T-cell (primary cell): ENCODE measurements at regions of chr15 and their contacts with region 1.

Region 1: GRCh38 chr15:51642614-51643013 is 20.0 kb upstream of the DMXL2 start:
- DNase-seq: no peak
- ATAC-seq: no peak
- H3K4me3 ChIP-seq: no peak overlapping the region
- H3K4me3 Mint-ChIP-seq: no peak overlapping the region
- H3K27ac ChIP-seq: no peak overlapping the region
- H3K27ac Mint-ChIP-seq: no peak overlapping the region
- H3K4me1 ChIP-seq: no peaks in the 10 kb centered on the region
- H3K4me1 Mint-ChIP-seq: no peaks in the 10 kb centered on the region
- H3K27me3 ChIP-seq: no peaks in the 10 kb centered on the region
- H3K27me3 Mint-ChIP-seq: peaks cover 0 to 3% of the 10 kb centered on the region in 2 donors

Region 2: GRCh38 chr15:51621936-51622603 is 20.5 kb before region 1 on chr15:
- CTCF ChIA-PET with region 1: interaction called in 1 of 2 experiments, 10 read pairs
- POLR2A ChIA-PET with region 1: no interaction called
- DNase-seq: peak in 27 of 35 experiments; percentile 0 to 39 (median 6)
- ATAC-seq: peak; percentile 40 to 57 (median 55)
- H3K4me3 ChIP-seq: peak overlapping the region; percentile 80 to 94
- H3K4me3 Mint-ChIP-seq: peak overlapping the region; percentile 82 to 85 (median 83)
- H3K27ac ChIP-seq: peak overlapping the region; percentile 24
- H3K27ac Mint-ChIP-seq: peak overlapping the region; percentile 32 to 77
- H3K4me1 ChIP-seq: peaks cover 8 to 15% of the 10 kb centered on the region in 2 experiments
- H3K4me1 Mint-ChIP-seq: peaks cover 17 to 20% (median 18%) of the 10 kb centered on the region in 3 donors
- H3K27me3 ChIP-seq: peaks cover 0 to 7% of the 10 kb centered on the region in 2 experiments
- H3K27me3 Mint-ChIP-seq: peaks cover 7% of the 10 kb centered on the region in 2 donors

Region 3: GRCh38 chr15:51708013-51708412 is 65.4 kb after region 1 on chr15:
- CTCF ChIA-PET with region 1: no interaction called
- POLR2A ChIA-PET with region 1: no interaction called
- DNase-seq: no peak
- ATAC-seq: no peak
- H3K4me3 ChIP-seq: no peak overlapping the region
- H3K4me3 Mint-ChIP-seq: no peak overlapping the region
- H3K27ac ChIP-seq: no peak overlapping the region
- H3K27ac Mint-ChIP-seq: no peak overlapping the region
- H3K4me1 ChIP-seq: no peaks in the 10 kb centered on the region
- H3K4me1 Mint-ChIP-seq: no peaks in the 10 kb centered on the region
- H3K27me3 ChIP-seq: no peaks in the 10 kb centered on the region
- H3K27me3 Mint-ChIP-seq: peaks cover 3 to 4% of the 10 kb centered on the region in 2 donors